Esophagus muscularis mucosa (tissue), 4 donors: ENCODE measurements at regions of chr10 and their contacts with region 1.

Region 1: GRCh38 chr10:96089670-96090462 is 40.2 kb upstream of the ZNF518A start:
- DNase-seq: peak; percentile 98
- H3K4me3 ChIP-seq: peak overlapping the region; percentile 73 to 91 (median 82)
- H3K27ac ChIP-seq: peak overlapping the region; percentile 88 to 94 (median 89)
- H3K4me1 ChIP-seq: peaks cover 0 to 12% (median 12%) of the 10 kb centered on the region in 4 donors
- H3K27me3 ChIP-seq: peaks cover 0 to 29% (median 7%) of the 10 kb centered on the region in 4 donors
- CTCF ChIP-seq: no peak
- EP300 ChIP-seq: no peak
- POLR2A ChIP-seq: no peak

Region 2: DNA sequence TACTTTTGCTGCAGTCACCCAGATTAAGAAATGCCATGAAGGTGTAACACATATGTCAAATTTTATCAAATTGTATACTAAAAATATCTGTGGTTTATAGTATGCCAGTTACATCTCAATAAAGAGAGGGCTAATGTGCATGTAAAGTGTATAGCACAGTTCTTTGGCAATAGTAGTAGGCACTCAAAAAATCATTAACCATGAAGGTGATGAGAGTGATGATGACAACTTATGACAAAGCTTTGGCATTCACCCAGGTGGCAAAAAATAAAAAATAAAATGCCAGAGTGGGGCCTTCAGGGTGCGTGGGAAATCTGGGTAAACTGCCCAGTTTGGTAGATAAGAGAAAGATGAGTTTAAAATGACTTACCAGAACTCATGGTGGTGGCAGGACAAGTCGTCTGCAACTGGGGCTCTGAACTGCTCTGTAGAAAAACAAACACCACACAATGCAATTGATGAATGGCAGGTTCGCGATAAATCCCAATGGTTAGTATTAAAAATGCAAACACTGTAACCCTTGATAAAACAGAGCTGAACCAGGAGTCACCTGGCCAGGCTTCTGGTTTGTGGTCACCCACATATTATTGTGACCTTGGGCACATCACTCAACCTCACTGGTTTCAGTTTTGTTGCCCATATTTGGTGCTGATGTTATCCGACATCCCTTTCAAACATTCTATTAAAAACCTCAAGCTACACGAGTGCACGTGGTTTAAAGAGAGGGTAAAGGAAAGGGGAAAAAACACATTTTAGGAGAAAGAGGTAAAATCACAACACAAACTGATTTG is 648.9 kb before region 1 on chr10:
- intact Hi-C with region 1: no loop called
- DNase-seq: no peak
- H3K4me3 ChIP-seq: no peak overlapping the region
- H3K27ac ChIP-seq: peak overlapping the region; percentile 85 to 97 (median 94)
- H3K4me1 ChIP-seq: peaks cover 92 to 100% (median 100%) of the 10 kb centered on the region in 4 donors
- H3K27me3 ChIP-seq: no peaks in the 10 kb centered on the region
- CTCF ChIP-seq: no peak
- EP300 ChIP-seq: no peak
- POLR2A ChIP-seq: no peak

Region 3: GRCh38 chr10:96043033-96043932 is 46.6 kb before region 1 on chr10 and contains the start of gene CCNJ:
- intact Hi-C with region 1: loop called (anchors 5 kb)
- DNase-seq: peak; percentile 93
- H3K4me3 ChIP-seq: peak within 1 kb of the TSS; percentile 73 to 92 (median 82)
- H3K27ac ChIP-seq: peak within 1 kb of the TSS; percentile 84 to 94 (median 92)
- H3K4me1 ChIP-seq: peaks cover 19 to 25% (median 22%) of the 10 kb centered on the region in 4 donors
- H3K27me3 ChIP-seq: no peaks in the 10 kb centered on the region
- CTCF ChIP-seq: peak in 2 of 3 experiments; percentile 22 to 49
- EP300 ChIP-seq: no peak
- POLR2A ChIP-seq: no peak
- total RNA-seq, gene CCNJ: 3.8 to 5.3 (median 4.8) TPM

Region 4: DNA sequence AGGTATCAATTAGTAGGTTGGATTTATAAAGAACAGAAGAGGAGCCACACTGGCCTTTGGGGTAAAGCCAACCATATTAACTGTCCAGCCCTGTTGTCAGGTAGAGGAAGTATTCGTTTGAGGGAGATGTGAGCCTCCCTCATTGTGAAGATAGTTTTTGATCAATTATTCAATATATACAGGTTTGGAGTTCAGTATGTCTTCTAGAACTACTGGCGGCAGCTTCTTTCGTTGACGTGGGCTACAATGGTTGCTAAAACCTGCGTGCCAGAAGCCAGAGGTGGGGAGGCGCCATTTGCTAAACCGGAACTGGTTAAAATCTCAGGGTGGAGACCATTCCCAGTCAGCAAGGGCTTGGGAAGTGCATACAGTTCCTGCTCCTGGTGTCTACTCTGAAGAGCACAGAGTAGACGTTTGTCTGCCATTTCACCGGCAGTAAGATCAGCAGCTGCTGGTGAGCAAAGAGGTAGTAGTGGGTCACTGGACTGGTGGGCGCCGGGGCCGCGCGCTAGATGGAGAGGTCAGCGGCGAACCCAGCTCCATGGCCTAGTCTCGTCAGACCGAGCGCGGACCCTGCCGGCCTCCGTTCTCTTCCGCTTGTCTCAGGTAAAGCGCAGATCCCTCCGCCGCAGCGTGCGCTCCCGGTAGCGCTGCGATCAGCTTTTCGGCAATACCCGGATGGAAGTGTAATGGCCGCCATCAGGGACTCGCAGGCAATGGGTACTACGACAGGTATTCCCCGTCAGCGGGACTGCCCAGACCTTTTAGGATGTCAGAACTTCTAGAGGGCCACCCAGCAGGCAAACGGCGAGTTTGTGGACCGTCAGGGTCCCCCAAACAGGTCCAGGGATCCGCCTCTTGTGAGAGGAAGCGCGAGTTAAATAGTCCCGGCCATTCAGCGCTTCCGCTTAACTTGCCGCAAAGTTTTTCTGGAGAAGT is 39.8 kb after region 1 on chr10 and contains the start of gene ZNF518A:
- intact Hi-C with region 1: loop called (anchors 1 kb)
- DNase-seq: peak; percentile 97
- H3K4me3 ChIP-seq: peak within 1 kb of the TSS; percentile 70 to 77 (median 73)
- H3K27ac ChIP-seq: peak within 1 kb of the TSS; percentile 88 to 95 (median 92)
- H3K4me1 ChIP-seq: peaks cover 3 to 16% (median 13%) of the 10 kb centered on the region in 4 donors
- H3K27me3 ChIP-seq: peaks cover 0 to 39% (median 14%) of the 10 kb centered on the region in 4 donors
- CTCF ChIP-seq: no peak
- EP300 ChIP-seq: no peak
- POLR2A ChIP-seq: peak; percentile 8
- total RNA-seq, gene ZNF518A: 11.6 to 20.8 (median 12.2) TPM